PC-3 (cell line): ENCODE measurements at regions of chr5 and their contacts with region 1.

Region 1: DNA sequence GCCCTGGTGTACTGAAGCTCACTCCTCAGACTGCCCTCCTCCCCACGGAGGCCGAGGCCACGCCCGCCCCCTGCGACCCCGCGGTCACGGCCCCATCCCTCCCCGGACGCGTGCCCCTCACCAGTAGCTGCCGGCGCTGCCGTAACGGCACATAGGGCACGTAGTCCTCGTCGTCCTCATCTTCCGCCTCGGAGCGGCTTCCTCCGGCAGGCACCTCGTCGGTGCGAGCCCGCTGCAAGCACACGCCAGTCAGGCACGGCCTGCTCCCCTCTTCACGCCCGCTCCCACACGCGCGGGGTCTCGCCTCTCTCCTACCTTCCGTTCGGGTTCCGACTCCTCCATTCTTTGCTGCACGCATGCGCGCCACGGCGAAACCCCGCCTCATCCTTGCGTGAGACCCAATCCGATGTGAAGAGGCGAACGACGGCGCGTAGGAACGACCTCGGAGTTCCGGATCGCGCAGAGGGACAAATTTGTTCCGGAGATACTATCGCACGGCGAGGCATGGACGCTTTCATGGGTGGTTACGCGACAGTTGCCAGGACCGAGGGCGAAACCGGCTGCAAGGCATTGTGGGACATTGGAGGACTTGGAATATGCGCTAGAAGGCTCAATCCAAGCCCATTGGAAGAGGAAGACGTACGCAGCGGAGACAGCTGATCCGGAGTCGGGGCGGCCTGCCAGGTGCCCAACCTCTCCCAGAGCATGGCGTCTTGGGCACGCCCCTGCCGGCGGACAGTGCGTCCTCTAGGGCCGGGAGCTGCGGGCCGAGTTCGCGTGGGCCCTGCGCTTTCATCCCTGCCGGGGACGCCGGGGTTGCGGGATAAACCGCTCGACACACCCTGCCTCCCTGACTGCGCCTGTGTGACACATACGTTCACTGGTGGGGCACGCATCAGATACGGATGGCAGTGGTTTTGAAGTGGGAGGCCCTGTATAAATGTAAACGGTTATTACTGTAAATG is at the start of gene DDX41:
- DNase-seq: peak; percentile 99
- ATAC-seq: peak; percentile 86
- H3K4me3 ChIP-seq: peak within 1 kb of the TSS; percentile 98
- H3K27ac ChIP-seq: peak within 1 kb of the TSS; percentile 70
- H3K4me1 ChIP-seq: peaks cover 22% of the 10 kb centered on the region
- H3K27me3 ChIP-seq: no peaks in the 10 kb centered on the region
- CTCF ChIP-seq: no peak
- total RNA-seq, gene DDX41: 260 and 318 TPM in 2 replicates

Region 2: DNA sequence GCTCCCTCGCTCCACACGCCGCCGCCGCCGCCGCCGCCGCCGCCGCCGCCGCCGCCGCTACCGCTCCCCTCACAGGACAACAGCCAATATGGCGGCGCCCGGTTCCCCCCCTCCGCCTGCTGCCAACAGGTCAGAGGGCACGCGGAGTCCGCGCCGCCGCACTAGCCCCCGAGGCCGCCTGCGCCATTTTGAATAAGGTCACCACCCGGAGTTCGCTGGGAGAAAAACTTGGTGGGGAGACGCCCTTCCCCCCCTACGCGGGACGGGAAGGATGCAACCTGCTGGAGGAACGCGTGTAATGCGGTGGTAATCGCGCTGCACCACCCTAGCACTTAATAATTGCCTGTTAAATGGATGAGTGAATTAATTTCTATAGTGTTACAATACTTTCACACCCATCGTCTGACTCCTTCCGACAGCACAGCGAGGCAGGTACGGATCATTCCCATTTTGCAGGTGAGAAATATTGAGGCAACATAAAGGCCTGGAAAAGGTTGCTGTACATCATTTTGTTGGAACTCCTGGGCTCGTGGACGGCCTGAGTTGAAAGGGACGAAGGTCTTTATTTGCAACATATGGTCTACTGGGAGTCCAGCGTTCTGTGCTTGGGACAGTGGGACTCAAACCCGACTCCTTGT is 37.7 kb after region 1 on chr5 and contains the start of gene FAM193B:
- CTCF ChIA-PET with region 1: no interaction called
- POLR2A ChIA-PET with region 1: no interaction called
- intact Hi-C with region 1: loop called (anchors 5 kb)
- DNase-seq: peak; percentile 91
- ATAC-seq: peak; percentile 84
- H3K4me3 ChIP-seq: peak within 1 kb of the TSS; percentile 93
- H3K27ac ChIP-seq: no peak within 1 kb of the TSS
- H3K4me1 ChIP-seq: peaks cover 21% of the 10 kb centered on the region
- H3K27me3 ChIP-seq: no peaks in the 10 kb centered on the region
- CTCF ChIP-seq: peak; percentile 34; the same call in 1 of the 2 replicates
- total RNA-seq, gene FAM193B: 33.9 and 41.1 TPM in 2 replicates

Region 3: GRCh38 chr5:177588413-177588909 is 71.6 kb after region 1 on chr5:
- CTCF ChIA-PET with region 1: no interaction called
- POLR2A ChIA-PET with region 1: no interaction called
- intact Hi-C with region 1: no loop called
- DNase-seq: no peak
- ATAC-seq: no peak
- H3K4me3 ChIP-seq: no peak overlapping the region
- H3K27ac ChIP-seq: no peak overlapping the region
- H3K4me1 ChIP-seq: peaks cover 12% of the 10 kb centered on the region
- H3K27me3 ChIP-seq: peaks cover 29% of the 10 kb centered on the region; the same call in 1 of the 2 replicates
- CTCF ChIP-seq: no peak

Region 4: DNA sequence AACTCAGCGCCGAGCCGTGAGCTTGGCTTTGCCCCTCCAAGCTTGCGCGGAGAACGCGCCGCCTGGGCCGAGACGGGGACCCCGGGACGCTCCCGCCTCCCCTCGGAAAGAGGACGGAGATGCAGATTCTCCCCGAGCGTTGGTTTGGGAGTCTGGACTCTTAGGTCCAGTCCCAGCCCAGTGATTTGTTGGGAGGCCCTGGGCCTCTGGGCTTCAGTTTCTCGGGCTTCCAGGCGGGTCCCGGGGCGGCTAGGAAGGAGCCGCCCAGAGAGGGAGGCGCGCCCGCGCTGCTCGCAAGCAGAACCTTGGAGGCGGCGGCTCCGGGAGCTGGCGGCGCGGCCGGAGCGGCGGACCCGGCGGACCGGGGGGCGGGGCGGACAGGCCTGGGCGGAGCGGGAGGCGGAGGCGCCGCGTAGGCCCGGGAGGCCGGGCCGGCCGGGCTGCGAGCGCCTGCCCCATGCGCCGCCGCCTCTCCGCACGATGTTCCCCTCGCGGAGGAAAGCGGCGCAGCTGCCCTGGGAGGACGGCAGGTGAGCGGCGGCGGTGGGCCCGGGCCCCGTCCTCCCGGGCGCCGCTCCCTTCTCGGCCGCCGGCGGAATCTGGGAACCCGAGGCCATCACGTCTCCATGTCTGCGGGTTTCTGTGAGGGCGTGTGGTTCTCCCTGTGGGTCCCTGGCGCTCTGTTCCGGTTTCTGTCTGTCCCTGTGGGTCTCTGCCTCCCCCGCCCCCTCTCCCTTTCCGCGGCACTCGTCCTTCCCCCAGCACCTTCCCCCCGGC is 83.0 kb after region 1 on chr5 and contains the start of gene B4GALT7:
- CTCF ChIA-PET with region 1: no interaction called
- POLR2A ChIA-PET with region 1: no interaction called
- intact Hi-C with region 1: loop called (anchors 2 kb)
- DNase-seq: peak; percentile 82
- ATAC-seq: peak; percentile 87
- H3K4me3 ChIP-seq: peak within 1 kb of the TSS; percentile 99
- H3K27ac ChIP-seq: peak within 1 kb of the TSS; percentile 61
- H3K4me1 ChIP-seq: peaks cover 9% of the 10 kb centered on the region; the same call in 1 of the 2 replicates
- H3K27me3 ChIP-seq: no peaks in the 10 kb centered on the region
- CTCF ChIP-seq: no peak
- total RNA-seq, gene B4GALT7: 33.8 and 41.6 TPM in 2 replicates